HEK293T (cell line): ENCODE measurements at regions of chr2 and their contacts with region 1.

Region 1: GRCh38 chr2:28870146-28870891 is at the start of gene TRMT61B:
- DNase-seq: peak; percentile 98

Region 2: GRCh38 chr2:28855193-28855592 is 15.1 kb before region 1 on chr2:
- CTCF ChIA-PET with region 1: no interaction called
- POLR2A ChIA-PET with region 1: interaction called, 10 read pairs
- DNase-seq: no peak

Region 3: DNA sequence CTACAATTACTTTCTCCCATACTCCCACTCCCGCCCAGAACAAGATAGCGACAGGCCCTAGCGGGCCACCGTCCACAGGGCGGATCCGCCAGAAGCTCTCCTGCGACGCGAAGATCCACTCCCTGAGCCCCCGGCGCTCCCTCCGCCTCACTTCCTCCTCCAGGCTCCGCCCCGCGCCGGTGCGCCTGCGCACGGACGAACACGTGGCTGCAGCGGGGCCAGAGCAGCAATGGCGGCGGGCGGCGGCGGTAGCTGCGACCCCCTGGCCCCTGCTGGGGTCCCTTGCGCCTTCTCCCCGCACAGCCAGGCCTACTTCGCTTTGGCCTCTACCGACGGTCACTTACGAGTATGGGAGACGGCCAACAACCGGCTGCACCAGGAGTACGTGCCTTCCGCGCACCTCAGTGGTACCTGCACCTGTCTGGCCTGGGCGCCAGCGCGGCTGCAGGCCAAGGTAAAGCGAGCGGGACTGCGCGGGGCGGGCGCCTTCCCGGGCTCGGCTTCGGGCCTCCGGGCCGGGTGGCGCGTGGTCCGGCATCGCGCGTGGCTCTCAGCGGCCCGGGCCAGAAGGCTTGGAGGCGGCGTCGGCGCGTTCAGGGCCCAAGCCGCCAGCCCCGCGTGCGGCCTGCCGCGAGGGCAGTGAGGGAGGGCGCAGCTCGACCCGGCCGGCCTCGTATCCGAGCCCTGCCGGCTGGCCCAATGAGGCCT is 24.3 kb after region 1 on chr2 and contains the start of gene WDR43:
- CTCF ChIA-PET with region 1: no interaction called
- POLR2A ChIA-PET with region 1: interaction called, 22 read pairs
- DNase-seq: peak; percentile 97